Activated T-helper 1 cell treated with anti-CD3 and anti-CD28 coated beads, Interleukin-12 subunit alpha, Interleukin-12 subunit beta, Interleukin-2, Interleukin-4 antibody, amounts not matched to agents 30 ng/mL and 10 ng/mL and 1 ng/mL, durations not matched to agents 14 hours and 24 hours and 36 hours (primary cell): ENCODE measurements at regions of chr9 and their contacts with region 1.

Region 1: DNA sequence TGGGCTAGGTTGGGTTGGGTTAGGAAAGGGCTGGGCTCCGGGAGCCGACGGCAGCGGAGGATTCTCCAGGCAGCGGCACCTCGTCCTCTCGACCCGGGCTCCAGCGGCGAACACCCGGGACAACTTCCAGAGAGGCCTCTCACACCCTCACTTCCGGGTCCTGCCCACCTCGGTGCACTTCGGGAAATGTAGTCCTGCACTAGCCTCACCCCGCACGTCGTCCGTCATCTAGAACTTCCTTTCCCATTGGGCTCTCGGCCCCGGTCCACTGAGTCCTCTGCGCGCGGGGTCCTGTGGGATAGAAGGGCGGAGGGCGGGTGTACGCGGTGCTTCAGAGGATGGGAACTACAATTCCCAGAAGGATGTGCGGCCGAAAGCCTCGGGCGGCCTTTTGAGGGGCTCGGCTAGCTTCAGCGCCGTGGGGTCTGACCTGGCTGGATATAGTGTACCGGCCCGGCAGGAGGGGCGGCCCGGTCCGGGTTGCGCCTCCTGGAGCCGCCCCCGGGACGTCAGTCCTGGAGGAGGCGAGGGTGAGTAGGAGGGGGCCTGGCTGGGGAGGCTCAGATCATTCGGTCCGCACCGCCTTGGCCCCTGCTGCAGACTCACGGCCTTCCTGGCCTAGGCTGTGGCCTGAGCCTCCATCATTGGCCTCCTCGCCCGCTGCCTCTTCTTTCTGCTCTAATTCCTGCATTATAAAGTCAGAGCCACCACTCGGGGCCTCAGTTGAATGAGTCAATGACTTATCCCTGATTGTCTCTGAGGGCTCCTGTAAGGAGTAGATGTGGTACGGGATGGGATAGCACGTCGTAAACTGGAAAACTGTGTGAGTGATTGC is at the starts of genes ERP44 and INVS:
- DNase-seq: peak; percentile 96
- H3K4me3 Mint-ChIP-seq: peak within 1 kb of the TSS; percentile 99
- H3K27ac Mint-ChIP-seq: peak within 1 kb of the TSS; percentile 95
- H3K4me1 Mint-ChIP-seq: peaks cover 34% of the 10 kb centered on the region
- H3K27me3 Mint-ChIP-seq: no peaks in the 10 kb centered on the region
- total RNA-seq, gene ERP44: 17.3 and 18.1 TPM in 2 replicates
- total RNA-seq, gene INVS: 16.3 and 17.0 TPM in 2 replicates

Region 2: DNA sequence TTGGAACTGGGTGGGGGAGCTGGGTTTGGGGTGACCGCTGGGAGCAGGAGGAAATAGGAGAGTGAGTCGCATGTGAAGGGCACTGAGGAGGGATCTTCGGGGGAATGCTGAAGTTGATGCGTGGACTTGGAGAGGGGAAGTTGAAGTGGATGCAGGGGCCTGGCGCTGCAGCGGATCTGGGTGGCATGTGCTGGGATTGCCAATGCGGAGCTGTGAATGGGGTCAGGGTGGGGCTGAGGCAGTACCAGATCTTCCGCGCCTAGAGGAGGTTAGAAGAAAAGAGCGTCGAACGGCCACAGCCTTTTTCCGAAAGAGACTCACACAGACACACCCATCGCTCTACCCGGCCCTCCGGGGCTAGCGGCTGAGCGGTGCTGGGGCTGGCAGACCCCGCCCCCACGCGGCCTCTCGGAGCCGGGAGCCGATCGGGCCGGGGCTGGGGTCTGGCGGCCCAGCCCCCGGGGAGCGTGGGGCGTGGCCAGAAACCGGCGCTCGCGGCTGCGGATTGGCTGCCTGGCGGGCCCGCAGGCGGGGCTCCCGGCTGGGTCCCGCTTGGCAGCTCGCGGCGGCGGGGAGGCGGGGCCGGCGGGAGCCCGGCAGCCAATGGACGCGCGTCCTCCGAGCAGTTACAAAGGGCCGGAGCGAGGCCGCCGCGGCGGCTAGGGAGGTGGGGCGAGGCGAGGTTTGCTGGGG is 994.5 kb before region 1 on chr9 and contains the start of gene TGFBR1:
- intact Hi-C with region 1: loop called (anchors 2 kb)
- DNase-seq: peak; percentile 97
- H3K4me3 Mint-ChIP-seq: peak within 1 kb of the TSS; percentile 85
- H3K27ac Mint-ChIP-seq: peak within 1 kb of the TSS; percentile 83
- H3K4me1 Mint-ChIP-seq: peaks cover 65% of the 10 kb centered on the region
- H3K27me3 Mint-ChIP-seq: no peaks in the 10 kb centered on the region
- total RNA-seq, gene TGFBR1: 38.5 and 42.6 TPM in 2 replicates

Region 3: DNA sequence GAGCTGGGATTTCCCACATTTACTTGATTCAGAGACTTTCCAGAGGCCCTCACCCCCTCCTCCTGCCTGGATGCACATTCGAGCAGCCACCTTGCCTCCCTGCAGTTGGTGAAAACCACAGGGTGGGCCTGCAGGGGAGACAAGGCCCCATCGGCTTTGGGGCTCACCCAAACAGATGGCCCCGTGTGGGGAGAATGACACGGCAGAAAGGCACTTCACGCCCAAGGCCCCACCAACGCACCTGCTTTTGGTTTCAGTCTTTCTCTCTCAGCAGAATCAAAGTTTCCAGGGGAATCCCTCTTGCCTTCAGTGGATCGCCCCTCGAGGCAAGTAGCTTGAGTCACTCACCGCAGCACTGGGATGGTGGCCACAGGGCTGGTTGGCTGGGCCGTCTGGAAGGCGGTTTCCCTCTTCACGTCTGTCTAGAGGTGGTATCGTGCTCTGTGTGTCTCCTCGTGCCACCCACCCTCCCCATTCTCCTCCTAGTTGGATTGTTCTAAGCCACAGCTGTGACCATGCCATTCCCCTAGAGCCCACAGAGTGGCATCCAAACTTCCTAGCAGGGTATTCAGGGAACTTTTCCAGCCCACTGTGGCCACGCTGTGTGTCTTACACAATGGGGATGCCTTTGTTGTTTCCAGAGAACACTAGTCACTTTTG is 845.2 kb before region 1 on chr9:
- intact Hi-C with region 1: loop called (anchors 1 kb)
- DNase-seq: peak; percentile 82
- H3K4me3 Mint-ChIP-seq: peak overlapping the region; percentile 55
- H3K27ac Mint-ChIP-seq: peak overlapping the region; percentile 92
- H3K4me1 Mint-ChIP-seq: peaks cover 62% of the 10 kb centered on the region
- H3K27me3 Mint-ChIP-seq: no peaks in the 10 kb centered on the region

Region 4: GRCh38 chr9:99523838-99524237 is 575.3 kb before region 1 on chr9:
- intact Hi-C with region 1: no loop called
- DNase-seq: no peak
- H3K4me3 Mint-ChIP-seq: no peak overlapping the region
- H3K27ac Mint-ChIP-seq: no peak overlapping the region
- H3K4me1 Mint-ChIP-seq: no peaks in the 10 kb centered on the region
- H3K27me3 Mint-ChIP-seq: peaks cover 14% of the 10 kb centered on the region

Region 5: GRCh38 chr9:99840072-99840471 is 259.0 kb before region 1 on chr9:
- intact Hi-C with region 1: no loop called
- DNase-seq: no peak
- H3K4me3 Mint-ChIP-seq: no peak overlapping the region
- H3K27ac Mint-ChIP-seq: no peak overlapping the region
- H3K4me1 Mint-ChIP-seq: no peaks in the 10 kb centered on the region
- H3K27me3 Mint-ChIP-seq: no peaks in the 10 kb centered on the region

Region 6: DNA sequence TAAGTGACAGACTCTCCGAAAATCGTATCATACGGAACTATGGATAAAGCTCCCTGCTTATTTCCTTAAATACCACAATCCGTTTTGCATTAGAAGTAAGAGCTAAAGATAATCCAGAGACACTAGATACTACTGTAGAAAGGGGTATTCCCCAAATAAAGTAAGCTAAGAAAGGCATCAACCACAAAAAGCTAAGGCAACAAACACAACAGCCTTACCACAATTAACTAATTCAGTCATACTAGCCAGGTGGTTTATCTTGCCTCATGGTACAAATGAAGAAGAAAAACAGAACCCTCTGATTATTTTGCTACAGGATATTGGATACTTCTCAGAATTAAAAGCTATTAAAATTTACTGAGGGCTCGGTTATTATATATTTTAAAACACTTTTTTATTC is 14.4 kb before region 1 on chr9:
- intact Hi-C with region 1: loop called (anchors 1 kb)
- DNase-seq: no peak
- H3K4me3 Mint-ChIP-seq: peak overlapping the region; percentile 23
- H3K27ac Mint-ChIP-seq: no peak overlapping the region
- H3K4me1 Mint-ChIP-seq: peaks cover 64% of the 10 kb centered on the region
- H3K27me3 Mint-ChIP-seq: peaks cover 2% of the 10 kb centered on the region

Region 7: DNA sequence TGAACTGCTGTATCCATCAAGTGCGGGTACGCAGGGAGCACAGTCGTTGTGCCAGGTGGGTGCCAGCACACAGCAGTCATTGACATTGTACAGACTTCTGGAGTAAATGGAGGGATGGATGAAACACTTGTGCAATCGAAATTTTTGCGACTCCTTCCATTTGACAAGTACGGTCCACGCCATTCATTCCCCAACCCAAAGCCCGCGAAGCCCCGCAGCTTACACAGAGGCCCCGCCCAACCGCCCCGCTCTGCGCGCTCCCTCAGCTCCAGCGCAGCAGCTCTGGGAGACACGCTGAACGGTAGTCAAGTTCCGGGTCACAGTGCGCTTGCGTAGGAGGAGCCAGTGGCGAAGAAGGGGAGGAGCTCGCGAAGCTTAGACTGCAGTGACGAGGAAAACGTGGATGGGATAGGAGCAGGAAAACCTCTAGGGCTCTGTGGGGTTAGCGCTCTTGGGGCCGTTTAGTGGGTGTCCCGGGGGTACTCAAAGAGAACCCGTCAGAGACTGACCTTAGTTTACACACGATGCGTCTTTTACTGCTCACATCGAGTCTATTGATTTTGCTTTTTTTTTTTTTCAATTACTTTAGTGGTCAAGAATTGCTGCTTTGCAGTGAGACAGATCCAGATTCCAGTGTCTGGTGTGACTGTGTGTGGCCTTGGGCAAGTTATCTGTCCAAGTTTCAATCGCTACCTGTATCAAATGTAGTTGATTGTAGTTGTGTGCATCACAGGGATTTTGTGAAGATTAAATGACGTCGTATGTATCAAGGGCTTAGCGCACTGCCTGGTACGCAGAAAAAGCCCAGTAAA is 312.6 kb after region 1 on chr9:
- intact Hi-C with region 1: loop called (anchors 5 kb)
- DNase-seq: peak; percentile 81
- H3K4me3 Mint-ChIP-seq: peak overlapping the region; percentile 83
- H3K27ac Mint-ChIP-seq: peak overlapping the region; percentile 65
- H3K4me1 Mint-ChIP-seq: peaks cover 13% of the 10 kb centered on the region
- H3K27me3 Mint-ChIP-seq: peaks cover 11% of the 10 kb centered on the region

Region 8: GRCh38 chr9:100589582-100589981 is 490.5 kb after region 1 on chr9:
- intact Hi-C with region 1: no loop called
- DNase-seq: no peak
- H3K4me3 Mint-ChIP-seq: no peak overlapping the region
- H3K27ac Mint-ChIP-seq: no peak overlapping the region
- H3K4me1 Mint-ChIP-seq: no peaks in the 10 kb centered on the region
- H3K27me3 Mint-ChIP-seq: no peaks in the 10 kb centered on the region

Region 9: GRCh38 chr9:101530077-101530711 is 1431.1 kb after region 1 on chr9:
- intact Hi-C with region 1: loop called (anchors 10 kb)
- DNase-seq: peak; percentile 58
- H3K4me3 Mint-ChIP-seq: no peak overlapping the region
- H3K27ac Mint-ChIP-seq: no peak overlapping the region
- H3K4me1 Mint-ChIP-seq: peaks cover 23% of the 10 kb centered on the region
- H3K27me3 Mint-ChIP-seq: peaks cover 12% of the 10 kb centered on the region